PC-3 (cell line): ENCODE measurements at regions of chr3 and their contacts with region 1.

Region 1: DNA sequence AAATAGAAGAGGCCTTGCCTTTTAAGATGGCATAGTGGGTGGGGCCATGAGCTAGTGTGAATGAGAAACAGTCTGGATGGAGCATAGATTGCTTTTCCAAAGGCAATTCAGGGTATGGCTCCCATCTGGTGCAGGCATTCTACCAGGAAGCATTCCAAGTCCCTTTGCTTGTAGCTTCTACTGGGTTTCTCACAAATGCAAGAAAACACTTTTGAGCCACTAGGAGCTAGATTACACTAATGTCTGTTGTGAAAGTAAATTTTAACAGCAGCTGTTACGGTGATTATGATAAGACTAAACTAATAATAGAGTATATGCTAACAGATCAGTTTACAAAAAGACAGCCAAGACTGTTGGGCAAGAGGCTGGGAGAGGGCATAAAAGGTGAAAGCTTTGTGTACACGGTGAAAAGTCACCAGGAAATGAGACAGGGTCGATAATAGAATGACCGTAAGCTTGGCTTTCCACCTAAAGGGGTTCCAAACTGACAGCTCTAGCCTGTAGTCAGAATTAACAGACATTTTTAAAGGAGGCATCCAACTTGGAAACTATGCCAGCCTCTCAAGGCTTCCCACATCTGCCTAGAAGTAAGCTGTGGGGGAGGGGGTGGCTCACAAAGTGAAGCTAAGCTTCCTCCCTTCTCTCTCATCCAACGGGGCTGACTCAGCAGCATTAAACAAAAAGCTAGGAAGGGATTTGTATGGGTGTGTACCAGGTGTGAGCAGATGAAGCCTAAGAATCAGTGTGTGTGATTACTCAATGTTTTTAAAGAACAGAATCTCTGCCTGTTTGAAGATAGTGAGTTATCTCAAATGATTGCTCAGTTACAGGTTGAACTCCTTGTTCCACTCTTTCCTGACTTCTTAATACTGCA is 61.1 kb upstream of the GPD1L start:
- DNase-seq: peak; percentile 92
- ATAC-seq: peak; percentile 87
- H3K4me3 ChIP-seq: peak overlapping the region; percentile 31
- H3K27ac ChIP-seq: peak overlapping the region; percentile 91
- H3K4me1 ChIP-seq: peaks cover 27% of the 10 kb centered on the region
- H3K27me3 ChIP-seq: no peaks in the 10 kb centered on the region
- CTCF ChIP-seq: no peak

Region 2: DNA sequence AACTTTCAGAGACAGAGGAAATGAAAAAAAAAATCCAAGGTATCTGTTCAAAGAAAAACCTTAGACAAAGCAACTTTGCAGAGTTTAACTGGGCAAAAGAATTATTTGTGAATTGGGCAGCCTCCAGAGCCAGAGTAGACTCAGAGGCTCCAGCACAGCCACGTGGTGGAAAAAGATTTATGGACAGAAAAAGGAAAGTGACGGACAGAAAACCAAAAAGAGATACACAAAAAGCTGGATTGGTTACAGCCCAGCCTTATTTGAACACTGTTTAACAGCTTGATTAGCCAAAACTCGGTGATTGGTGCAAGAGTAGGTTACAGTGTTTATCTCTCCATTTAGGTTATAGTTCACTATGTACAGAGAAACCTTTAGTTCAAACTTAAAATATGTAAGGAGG is 37.4 kb after region 1 on chr3:
- CTCF ChIA-PET with region 1: no interaction called
- POLR2A ChIA-PET with region 1: no interaction called
- intact Hi-C with region 1: loop called (anchors 5 kb)
- DNase-seq: peak; percentile 14
- ATAC-seq: peak; percentile 83
- H3K4me3 ChIP-seq: no peak overlapping the region
- H3K27ac ChIP-seq: no peak overlapping the region
- H3K4me1 ChIP-seq: peaks cover 9% of the 10 kb centered on the region
- H3K27me3 ChIP-seq: no peaks in the 10 kb centered on the region
- CTCF ChIP-seq: no peak

Region 3: DNA sequence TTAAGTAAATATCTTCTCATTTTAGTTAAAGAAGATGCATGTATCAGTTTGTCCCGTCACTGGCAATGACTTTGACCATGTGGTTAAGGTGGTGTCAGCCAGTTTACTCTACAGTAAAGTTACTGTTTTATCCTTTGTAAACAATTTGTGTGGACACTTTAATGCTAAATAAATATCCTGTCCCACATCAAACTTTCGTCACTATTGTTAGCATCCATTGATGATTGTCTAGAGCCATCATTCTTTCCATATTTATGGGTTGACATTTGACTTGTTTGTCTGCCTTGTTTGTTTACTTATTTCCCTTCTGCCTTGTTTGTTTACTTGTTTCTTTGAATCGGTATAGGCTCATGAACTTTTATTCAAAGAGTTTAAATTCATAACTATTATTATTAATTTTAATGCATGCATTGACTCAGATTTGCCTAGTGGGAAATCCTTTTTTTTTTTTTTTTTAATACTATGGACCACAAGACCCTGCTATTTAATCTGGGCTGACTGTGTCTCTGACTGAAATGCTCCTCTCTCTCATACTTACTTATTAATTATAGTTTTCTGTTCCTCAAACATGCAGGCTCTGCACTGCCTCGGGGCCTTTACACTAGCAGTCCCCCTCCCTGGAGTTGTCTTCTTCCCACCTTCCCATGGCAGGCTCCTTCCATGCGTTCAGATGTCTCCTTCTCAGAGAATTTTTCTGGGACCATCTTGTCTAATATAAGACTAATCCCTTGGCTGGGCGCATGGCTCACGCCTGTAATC is 50.3 kb after region 1 on chr3:
- CTCF ChIA-PET with region 1: no interaction called
- POLR2A ChIA-PET with region 1: no interaction called
- intact Hi-C with region 1: no loop called
- DNase-seq: peak; percentile 47
- ATAC-seq: peak; percentile 79
- H3K4me3 ChIP-seq: no peak overlapping the region
- H3K27ac ChIP-seq: no peak overlapping the region
- H3K4me1 ChIP-seq: no peaks in the 10 kb centered on the region
- H3K27me3 ChIP-seq: no peaks in the 10 kb centered on the region
- CTCF ChIP-seq: no peak

Region 4: GRCh38 chr3:32106280-32106928 is 61.1 kb after region 1 on chr3 and contains the start of gene GPD1L:
- CTCF ChIA-PET with region 1: no interaction called
- POLR2A ChIA-PET with region 1: no interaction called
- intact Hi-C with region 1: loop called (anchors 1 kb)
- DNase-seq: peak; percentile 98
- ATAC-seq: peak; percentile 90
- H3K4me3 ChIP-seq: peak within 1 kb of the TSS; percentile 93
- H3K27ac ChIP-seq: peak within 1 kb of the TSS; percentile 86
- H3K4me1 ChIP-seq: peaks cover 51% of the 10 kb centered on the region
- H3K27me3 ChIP-seq: no peaks in the 10 kb centered on the region
- CTCF ChIP-seq: no peak
- total RNA-seq, gene GPD1L: 33.7 and 42.8 TPM in 2 replicates